Mammary epithelial cell (primary cell): ENCODE measurements at regions of chr5 and their contacts with region 1.

Region 1: GRCh38 chr5:154467655-154468354 is 10.2 kb downstream of the HAND1 start:
- DNase-seq: peak; percentile 59
- H3K4me3 ChIP-seq: no peak overlapping the region
- H3K27ac ChIP-seq: no peak overlapping the region
- H3K4me1 ChIP-seq: no peaks in the 10 kb centered on the region
- H3K27me3 ChIP-seq: peaks cover 16% of the 10 kb centered on the region
- CTCF ChIP-seq: peak; percentile 89 to 94

Region 2: DNA sequence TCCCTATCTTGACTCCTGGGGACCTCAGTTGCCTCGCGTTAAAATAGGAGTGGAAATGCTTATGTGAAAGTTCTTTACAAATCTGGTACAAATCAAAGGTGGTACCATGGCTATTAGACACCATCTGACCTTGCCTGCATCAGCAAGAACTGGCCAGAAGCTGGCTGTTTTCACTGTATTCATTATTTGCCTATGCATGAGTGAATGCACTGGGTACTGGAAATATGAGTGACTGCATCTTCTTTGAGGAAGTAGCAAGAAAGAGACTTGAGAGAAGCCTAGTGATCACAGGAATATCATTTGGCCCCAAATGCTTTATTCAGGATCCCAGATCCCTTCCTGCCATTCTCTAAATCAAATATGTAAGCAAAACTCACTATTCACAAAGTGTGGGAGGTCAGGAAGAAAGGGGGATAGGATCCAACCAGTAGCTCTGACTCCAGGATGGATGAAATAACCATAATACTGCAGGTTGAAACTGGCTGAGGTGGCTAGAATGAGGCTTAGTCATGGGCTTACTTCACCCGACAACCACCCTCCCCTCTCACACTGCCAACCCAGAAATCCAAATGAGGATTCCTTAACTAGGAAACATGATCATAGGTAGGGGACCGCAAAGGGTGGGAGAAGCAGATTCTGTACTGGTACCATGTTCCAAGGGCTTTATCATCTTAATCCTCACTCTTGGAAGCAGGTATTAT is 485.8 kb before region 1 on chr5:
- CTCF ChIA-PET with region 1: no interaction called
- dilution Hi-C with region 1: no loop called
- in situ Hi-C with region 1: no loop called
- intact Hi-C with region 1: loop called (anchors 5 kb)
- DNase-seq: peak; percentile 58
- H3K4me3 ChIP-seq: no peak overlapping the region
- H3K27ac ChIP-seq: no peak overlapping the region
- H3K4me1 ChIP-seq: peaks cover 8% of the 10 kb centered on the region
- H3K27me3 ChIP-seq: no peaks in the 10 kb centered on the region
- CTCF ChIP-seq: no peak

Region 3: GRCh38 chr5:154445422-154446182 is 22.2 kb before region 1 on chr5 and contains the start of gene SAP30L:
- CTCF ChIA-PET with region 1: no interaction called
- dilution Hi-C with region 1: no loop called
- in situ Hi-C with region 1: no loop called
- intact Hi-C with region 1: loop called (anchors 2 kb)
- DNase-seq: peak; percentile 95
- H3K4me3 ChIP-seq: peak within 1 kb of the TSS; percentile 65 to 83 (median 68)
- H3K27ac ChIP-seq: peak within 1 kb of the TSS; percentile 47
- H3K4me1 ChIP-seq: peaks cover 29% of the 10 kb centered on the region
- H3K27me3 ChIP-seq: no peaks in the 10 kb centered on the region
- CTCF ChIP-seq: no peak
- total RNA-seq, gene SAP30L: 21.7 to 34.9 TPM

Region 4: DNA sequence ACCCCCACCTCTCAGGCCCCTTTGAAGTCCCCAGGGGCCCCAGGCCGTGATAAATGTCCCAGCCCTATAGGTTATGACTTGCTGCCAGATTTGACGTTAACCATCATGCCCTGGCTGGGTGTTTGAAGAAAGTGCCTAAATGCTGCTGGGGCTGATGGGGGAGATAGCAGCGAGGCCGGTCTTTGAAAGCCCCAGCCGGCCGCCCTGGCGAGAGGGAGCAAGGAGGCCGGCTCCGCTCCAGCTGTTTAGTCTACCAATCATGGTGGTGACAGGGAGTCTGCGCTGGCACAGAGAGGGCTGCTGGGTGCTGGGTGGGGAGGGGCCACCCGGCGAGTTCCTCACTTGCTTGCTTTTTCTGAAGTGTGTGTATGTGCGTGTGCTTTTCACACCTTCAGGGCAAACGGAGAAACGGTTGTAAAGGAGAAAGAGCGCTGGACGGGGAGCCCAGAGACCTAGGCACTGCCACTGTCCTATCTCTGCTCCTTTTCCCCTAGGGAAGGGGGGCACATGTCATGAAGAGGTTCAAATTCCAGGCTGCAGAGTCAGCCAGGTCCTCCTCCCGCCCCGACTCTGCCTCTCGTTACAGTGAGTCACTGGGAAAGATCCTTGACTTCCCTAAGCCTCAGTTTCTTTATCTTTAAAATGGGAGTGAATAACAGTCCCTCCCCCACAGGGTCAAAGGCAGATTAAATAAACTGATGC is 136.3 kb after region 1 on chr5:
- CTCF ChIA-PET with region 1: no interaction called
- dilution Hi-C with region 1: no loop called
- in situ Hi-C with region 1: loop called (anchors 5 to 10 kb)
- intact Hi-C with region 1: no loop called
- DNase-seq: no peak
- H3K4me3 ChIP-seq: no peak overlapping the region
- H3K27ac ChIP-seq: no peak overlapping the region
- H3K4me1 ChIP-seq: peaks cover 8% of the 10 kb centered on the region
- H3K27me3 ChIP-seq: no peaks in the 10 kb centered on the region
- CTCF ChIP-seq: no peak

Region 5: DNA sequence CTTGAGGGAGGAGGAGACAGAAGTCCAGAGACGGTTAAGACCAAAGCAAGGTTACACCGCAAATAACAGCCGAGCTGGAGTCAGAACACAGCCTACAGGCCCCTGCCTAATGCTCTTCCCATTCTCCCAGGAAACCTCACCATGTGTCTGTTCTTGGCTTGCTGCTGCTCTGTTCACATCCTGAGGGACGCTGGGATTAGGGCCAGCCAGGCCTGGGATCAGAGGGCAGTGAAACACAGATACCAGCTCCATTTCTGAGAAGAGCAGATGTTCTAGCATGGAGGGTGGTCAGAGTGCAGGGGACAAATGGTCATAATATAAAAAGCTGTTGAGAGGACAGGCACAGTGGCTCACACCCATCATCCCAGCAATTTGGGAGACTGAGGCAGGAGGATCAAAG is 162.6 kb after region 1 on chr5:
- CTCF ChIA-PET with region 1: no interaction called
- dilution Hi-C with region 1: no loop called
- in situ Hi-C with region 1: loop called in 1 of 2 experiments (anchors 10 kb)
- intact Hi-C with region 1: no loop called
- DNase-seq: no peak
- H3K4me3 ChIP-seq: no peak overlapping the region
- H3K27ac ChIP-seq: no peak overlapping the region
- H3K4me1 ChIP-seq: no peaks in the 10 kb centered on the region
- H3K27me3 ChIP-seq: no peaks in the 10 kb centered on the region
- CTCF ChIP-seq: no peak

Region 6: DNA sequence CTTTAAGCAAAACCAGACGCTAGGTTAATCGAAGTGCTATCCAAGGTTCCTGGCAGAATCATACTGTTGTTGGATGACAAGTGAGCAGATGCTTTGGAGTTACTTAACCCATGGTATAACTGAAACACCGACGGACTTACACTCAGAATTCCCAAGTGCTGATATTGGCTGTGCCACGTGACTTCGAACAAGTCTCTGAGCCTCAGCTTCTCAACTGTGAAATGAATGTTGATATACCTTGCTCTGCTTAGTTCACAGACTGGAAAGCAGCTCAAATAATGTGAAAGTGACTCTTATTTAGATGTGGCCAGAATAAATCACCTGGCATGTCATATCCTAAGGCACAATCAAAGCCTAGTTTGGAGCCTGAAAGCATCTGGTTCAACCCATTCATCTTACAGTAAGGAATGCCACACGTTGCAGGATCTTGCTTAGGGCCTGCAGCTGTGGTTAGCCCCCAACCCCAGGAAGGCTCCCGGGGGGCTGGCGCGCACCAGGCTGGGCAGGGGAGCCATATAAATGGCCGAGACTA is 469.4 kb after region 1 on chr5:
- CTCF ChIA-PET with region 1: no interaction called
- dilution Hi-C with region 1: no loop called
- in situ Hi-C with region 1: no loop called
- intact Hi-C with region 1: no loop called
- DNase-seq: peak; percentile 7
- H3K4me3 ChIP-seq: peak overlapping the region; percentile 86 to 91 (median 91)
- H3K27ac ChIP-seq: peak overlapping the region; percentile 41
- H3K4me1 ChIP-seq: peaks cover 19% of the 10 kb centered on the region
- H3K27me3 ChIP-seq: no peaks in the 10 kb centered on the region
- CTCF ChIP-seq: no peak

Region 7: GRCh38 chr5:154986151-154986550 is 518.3 kb after region 1 on chr5:
- CTCF ChIA-PET with region 1: no interaction called
- dilution Hi-C with region 1: no loop called
- in situ Hi-C with region 1: no loop called
- intact Hi-C with region 1: no loop called
- DNase-seq: no peak
- H3K4me3 ChIP-seq: no peak overlapping the region
- H3K27ac ChIP-seq: no peak overlapping the region
- H3K4me1 ChIP-seq: no peaks in the 10 kb centered on the region
- H3K27me3 ChIP-seq: no peaks in the 10 kb centered on the region
- CTCF ChIP-seq: no peak